AG04450 (cell line): ENCODE measurements at regions of chr7 and their contacts with region 1.

Region 1: GRCh38 chr7:142516038-142516501 is 233.2 kb upstream of the PRSS1 start:
- DNase-seq: peak; percentile 29
- H3K4me3 ChIP-seq: no peak overlapping the region
- H3K27ac ChIP-seq: no peak overlapping the region
- H3K27me3 ChIP-seq: peaks cover 11% of the 10 kb centered on the region
- CTCF ChIP-seq: peak; percentile 80

Region 2: DNA sequence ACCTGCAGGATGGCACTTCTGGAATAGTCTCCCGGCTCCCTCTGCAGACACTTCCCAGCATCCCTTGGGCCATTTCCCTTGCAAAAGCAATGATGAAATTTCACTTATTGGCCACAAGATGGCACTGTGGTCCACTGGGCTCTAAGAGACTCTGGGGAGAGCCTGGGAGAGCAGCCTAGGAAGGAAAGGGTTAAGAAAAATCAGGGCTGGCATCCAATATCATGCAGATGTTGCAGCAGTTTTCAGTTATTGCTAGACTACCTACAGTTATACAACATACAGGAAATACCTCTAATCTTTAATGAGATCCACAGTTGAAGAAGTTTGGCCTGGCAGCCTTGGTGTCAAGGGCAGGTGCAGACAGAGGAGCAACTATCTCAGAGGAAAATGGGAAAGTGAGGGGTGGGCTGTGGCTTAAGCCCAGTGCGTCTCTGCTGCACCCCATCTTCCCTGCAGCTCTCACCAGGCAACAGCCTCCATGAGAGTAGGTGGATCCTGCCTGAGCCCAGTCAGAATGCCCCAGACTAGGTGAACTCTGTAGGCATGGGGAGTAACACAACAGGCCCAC is 158.0 kb before region 1 on chr7:
- CTCF ChIA-PET with region 1: interaction called, 12 read pairs
- POLR2A ChIA-PET with region 1: no interaction called
- DNase-seq: peak; percentile 54
- H3K4me3 ChIP-seq: no peak overlapping the region
- H3K27ac ChIP-seq: no peak overlapping the region
- H3K27me3 ChIP-seq: no peaks in the 10 kb centered on the region
- CTCF ChIP-seq: peak; percentile 83

Region 3: DNA sequence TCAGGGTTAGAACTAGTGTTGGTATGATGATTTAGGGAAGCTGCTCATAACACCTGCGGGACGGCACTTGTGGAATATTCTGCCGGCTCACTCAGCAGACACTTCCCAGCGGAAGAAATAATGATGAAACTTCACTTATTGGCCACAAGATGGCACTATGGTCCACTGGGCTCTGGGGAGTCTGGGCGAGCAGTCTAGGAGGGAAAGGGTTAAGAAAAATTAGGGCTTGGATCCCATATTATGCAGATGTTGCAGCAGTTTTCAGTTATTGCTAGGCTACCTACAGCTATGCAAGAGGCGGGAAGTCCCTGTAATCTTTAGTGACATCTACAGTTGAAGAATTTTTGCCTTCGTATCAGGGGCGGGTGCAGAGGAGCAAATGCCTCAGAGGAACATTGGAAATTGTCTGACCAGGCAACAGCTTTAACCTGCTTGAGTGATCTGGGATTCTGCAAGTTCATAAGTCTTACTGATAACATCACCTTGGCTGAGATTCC is 19.5 kb before region 1 on chr7:
- CTCF ChIA-PET with region 1: interaction called, 36 read pairs
- POLR2A ChIA-PET with region 1: no interaction called
- DNase-seq: no peak
- H3K4me3 ChIP-seq: no peak overlapping the region
- H3K27ac ChIP-seq: no peak overlapping the region
- H3K27me3 ChIP-seq: peaks cover 5% of the 10 kb centered on the region
- CTCF ChIP-seq: peak; percentile 70

Region 4: GRCh38 chr7:142603870-142604448 is 87.9 kb after region 1 on chr7:
- CTCF ChIA-PET with region 1: interaction called, 17 read pairs
- POLR2A ChIA-PET with region 1: no interaction called
- DNase-seq: no peak
- H3K4me3 ChIP-seq: no peak overlapping the region; the same call in 1 of the 2 replicates
- H3K27ac ChIP-seq: no peak overlapping the region
- H3K27me3 ChIP-seq: peaks cover 2% of the 10 kb centered on the region
- CTCF ChIP-seq: peak; percentile 87

Region 5: DNA sequence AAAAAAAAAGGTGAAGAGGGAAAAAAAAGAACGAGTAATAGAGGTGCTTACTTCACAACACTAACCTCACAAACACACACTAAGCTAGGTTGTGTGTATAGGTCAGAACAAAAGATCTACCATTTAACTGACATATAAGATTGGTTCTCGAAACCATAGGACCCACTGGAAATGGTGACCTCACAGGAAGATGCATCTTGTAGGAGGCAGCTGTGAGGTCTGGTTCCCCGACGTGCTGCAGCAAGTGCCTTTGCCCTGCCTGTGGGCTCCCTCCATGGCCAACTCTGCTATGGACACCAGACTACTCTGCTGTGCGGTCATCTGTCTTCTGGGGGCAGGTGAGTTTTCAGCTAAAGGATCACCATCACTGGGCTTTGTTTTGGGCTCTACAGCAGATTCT is 99.4 kb after region 1 on chr7:
- CTCF ChIA-PET with region 1: no interaction called
- POLR2A ChIA-PET with region 1: no interaction called
- DNase-seq: no peak
- H3K4me3 ChIP-seq: no peak overlapping the region
- H3K27ac ChIP-seq: no peak overlapping the region
- H3K27me3 ChIP-seq: no peaks in the 10 kb centered on the region
- CTCF ChIP-seq: no peak

Region 6: DNA sequence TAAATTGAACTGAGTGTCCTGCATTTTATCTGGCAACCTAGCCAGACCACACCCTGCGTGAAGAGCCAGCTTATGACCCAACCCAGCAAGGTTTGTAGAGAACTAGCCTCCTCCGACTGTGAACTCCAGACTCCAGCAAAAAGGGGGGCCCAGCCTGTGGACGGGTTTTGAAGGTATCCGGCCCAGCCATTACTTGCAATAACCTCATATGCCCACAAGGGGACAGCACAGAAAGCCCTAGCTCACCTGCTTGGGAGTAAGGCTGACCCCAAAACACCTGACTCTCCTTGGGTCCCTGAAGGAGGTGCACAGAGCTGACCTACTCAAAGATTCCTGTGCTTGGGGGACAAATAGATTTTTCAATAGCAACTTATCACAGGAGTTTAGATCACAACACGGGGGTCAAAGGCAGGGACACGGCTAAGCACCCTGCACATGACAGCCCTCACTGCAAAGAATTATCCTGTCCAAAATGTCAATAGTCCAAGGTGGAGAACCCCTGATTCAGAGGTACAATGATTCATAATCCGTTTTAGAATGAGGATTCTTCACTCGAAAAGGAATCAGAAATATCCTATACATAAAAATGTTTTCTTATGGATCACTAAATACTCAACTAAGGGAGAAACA is 364.9 kb after region 1 on chr7:
- CTCF ChIA-PET with region 1: no interaction called
- POLR2A ChIA-PET with region 1: no interaction called
- DNase-seq: no peak
- H3K4me3 ChIP-seq: no peak overlapping the region
- H3K27ac ChIP-seq: no peak overlapping the region
- H3K27me3 ChIP-seq: no peaks in the 10 kb centered on the region
- CTCF ChIP-seq: peak; percentile 48